ENCODE measurements at regions of chr6 and their contacts with region 1.

Region 1: DNA sequence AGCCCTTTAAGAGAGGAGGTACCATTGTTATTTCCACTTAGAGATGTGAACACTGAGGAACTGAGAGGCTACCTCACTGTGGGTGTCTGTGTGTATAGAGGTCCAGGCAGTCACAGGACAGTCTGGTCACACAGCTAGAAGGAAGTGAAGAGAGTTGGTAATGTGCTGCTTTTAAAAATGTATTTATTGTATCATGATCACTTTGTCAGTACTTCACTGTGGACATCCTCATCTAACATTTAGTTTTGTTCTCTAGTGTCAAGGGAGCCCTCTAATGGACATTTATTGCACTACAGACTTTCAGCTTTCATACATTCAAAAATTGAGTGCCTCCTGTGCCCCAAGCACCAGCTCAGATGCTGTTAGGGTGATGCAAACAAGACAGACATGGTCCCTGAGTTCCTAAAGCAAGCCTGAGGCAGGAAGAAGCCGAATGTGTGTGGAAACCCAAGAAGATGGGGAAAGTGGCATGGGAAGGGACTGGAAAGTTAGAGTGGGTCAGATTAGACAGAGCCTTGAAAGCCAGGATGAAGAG is 123.0 kb downstream of the SLC16A10 start:
- DNase-seq: peak in 1 of 2 experiments; percentile 65
- H3K4me3 ChIP-seq: no peak overlapping the region
- H3K4me3 Mint-ChIP-seq: no peak overlapping the region
- H3K27ac Mint-ChIP-seq: no peak overlapping the region
- H3K4me1 ChIP-seq: no peaks in the 10 kb centered on the region
- H3K4me1 Mint-ChIP-seq: no peaks in the 10 kb centered on the region
- H3K27me3 ChIP-seq: no peaks in the 10 kb centered on the region
- H3K27me3 Mint-ChIP-seq: no peaks in the 10 kb centered on the region
- CTCF ChIP-seq: peak; percentile 60 to 77

Region 2: GRCh38 chr6:110528101-110528929 is 681.9 kb before region 1 on chr6:
- CTCF ChIA-PET with region 1: interaction called, 4 read pairs
- POLR2A ChIA-PET with region 1: no interaction called
- intact Hi-C with region 1: loop called (anchors 1 kb)
- DNase-seq: peak in 1 of 2 experiments; percentile 58
- H3K4me3 ChIP-seq: no peak overlapping the region
- H3K4me3 Mint-ChIP-seq: no peak overlapping the region
- H3K27ac Mint-ChIP-seq: no peak overlapping the region
- H3K4me1 ChIP-seq: peaks cover 3% of the 10 kb centered on the region; the same call in 1 of the 2 replicates
- H3K4me1 Mint-ChIP-seq: no peaks in the 10 kb centered on the region
- H3K27me3 ChIP-seq: no peaks in the 10 kb centered on the region
- H3K27me3 Mint-ChIP-seq: no peaks in the 10 kb centered on the region
- CTCF ChIP-seq: peak; percentile 68 to 79

Region 3: GRCh38 chr6:111011360-111012142 is 198.7 kb before region 1 on chr6:
- CTCF ChIA-PET with region 1: interaction called, 8 read pairs
- POLR2A ChIA-PET with region 1: no interaction called
- intact Hi-C with region 1: loop called (anchors 1 kb)
- DNase-seq: peak in 1 of 2 experiments; percentile 43
- H3K4me3 ChIP-seq: no peak overlapping the region
- H3K4me3 Mint-ChIP-seq: no peak overlapping the region
- H3K27ac Mint-ChIP-seq: no peak overlapping the region
- H3K4me1 ChIP-seq: no peaks in the 10 kb centered on the region
- H3K4me1 Mint-ChIP-seq: no peaks in the 10 kb centered on the region
- H3K27me3 ChIP-seq: no peaks in the 10 kb centered on the region
- H3K27me3 Mint-ChIP-seq: no peaks in the 10 kb centered on the region
- CTCF ChIP-seq: peak; percentile 62 to 67

Region 4: DNA sequence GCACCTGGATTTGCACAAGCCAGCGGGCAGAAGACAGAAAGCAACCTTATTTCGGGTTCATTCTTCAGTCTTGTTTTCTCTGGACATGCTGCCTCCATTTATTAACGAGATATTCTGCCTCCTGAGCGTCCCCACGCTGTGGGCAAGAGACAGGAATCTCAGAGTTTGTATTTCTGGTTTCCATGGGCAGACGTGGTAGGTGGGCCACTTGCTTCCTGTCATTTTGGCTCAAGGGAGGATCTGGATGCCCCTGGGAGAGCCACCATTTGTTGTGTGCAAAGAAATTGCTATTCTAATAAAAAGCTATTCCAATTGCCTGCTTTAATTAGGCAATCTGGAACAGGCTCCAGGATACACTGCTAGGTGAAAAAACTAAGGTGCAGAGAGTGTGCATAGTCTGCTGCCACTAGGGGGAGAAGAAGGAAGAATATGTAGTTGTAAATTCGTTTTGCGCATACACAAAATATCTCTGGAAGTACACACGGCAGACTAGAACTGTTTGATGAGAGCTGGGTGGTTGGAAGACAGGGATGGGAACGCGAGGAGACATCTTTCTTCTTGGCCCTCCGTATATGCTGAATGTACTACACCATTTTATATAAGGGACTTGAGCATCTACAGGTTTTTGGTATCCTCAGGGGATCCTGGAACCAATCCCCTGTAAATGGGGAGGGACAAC is 153.0 kb before region 1 on chr6:
- CTCF ChIA-PET with region 1: interaction called, 18 read pairs
- POLR2A ChIA-PET with region 1: no interaction called
- intact Hi-C with region 1: loop called (anchors 1 kb)
- DNase-seq: peak; percentile 19 to 39
- H3K4me3 ChIP-seq: no peak overlapping the region
- H3K4me3 Mint-ChIP-seq: no peak overlapping the region
- H3K27ac Mint-ChIP-seq: no peak overlapping the region
- H3K4me1 ChIP-seq: no peaks in the 10 kb centered on the region
- H3K4me1 Mint-ChIP-seq: peaks cover 11% of the 10 kb centered on the region
- H3K27me3 ChIP-seq: no peaks in the 10 kb centered on the region
- H3K27me3 Mint-ChIP-seq: no peaks in the 10 kb centered on the region
- CTCF ChIP-seq: peak; percentile 71 to 82

Region 5: DNA sequence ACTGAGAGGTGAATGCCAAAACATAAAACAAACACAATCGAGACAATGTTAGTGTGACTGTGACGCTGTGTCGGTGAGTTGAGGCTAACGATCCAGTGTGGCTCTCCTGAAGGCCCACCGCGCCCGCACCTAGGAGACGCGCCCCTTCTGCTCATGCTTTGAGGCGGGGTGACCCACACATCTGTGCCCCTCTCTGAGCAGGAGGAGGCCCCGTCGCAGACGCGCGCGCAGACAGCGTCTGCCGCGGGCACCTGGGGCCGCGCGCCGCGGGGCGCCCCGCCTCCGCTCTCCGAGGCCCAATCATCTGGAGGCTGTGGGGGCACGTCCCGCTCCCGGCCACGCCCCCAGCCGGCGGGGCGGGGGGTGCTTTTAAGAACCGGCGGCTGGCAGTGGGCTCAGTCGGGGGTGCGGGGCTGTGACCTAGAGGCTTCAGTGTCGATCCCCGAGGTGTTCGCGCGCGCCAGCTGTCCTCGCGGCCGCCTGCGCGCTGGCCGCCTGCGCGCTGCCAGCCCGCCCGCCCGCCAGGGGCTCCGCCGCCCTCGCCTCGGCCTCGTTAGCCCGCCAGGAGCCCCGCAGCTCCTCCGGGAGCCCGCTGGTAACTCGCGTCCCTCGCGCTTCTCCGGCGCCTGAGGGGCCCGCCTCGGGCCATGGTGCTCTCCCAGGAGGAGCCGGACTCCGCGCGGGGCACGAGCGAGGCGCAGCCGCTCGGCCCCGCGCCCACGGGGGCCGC is 123.0 kb before region 1 on chr6 and contains the start of gene SLC16A10:
- CTCF ChIA-PET with region 1: no interaction called
- POLR2A ChIA-PET with region 1: no interaction called
- intact Hi-C with region 1: loop called (anchors 10 kb)
- DNase-seq: peak; percentile 83 to 90
- H3K4me3 ChIP-seq: peak within 1 kb of the TSS; percentile 85
- H3K4me3 Mint-ChIP-seq: peak within 1 kb of the TSS; percentile 87
- H3K27ac Mint-ChIP-seq: peak within 1 kb of the TSS; percentile 39
- H3K4me1 ChIP-seq: 0 out of 2 replicates have a peak, but pooled peaks cover 7% of the 10 kb centered on the region
- H3K4me1 Mint-ChIP-seq: peaks cover 14% of the 10 kb centered on the region
- H3K27me3 ChIP-seq: no peaks in the 10 kb centered on the region
- H3K27me3 Mint-ChIP-seq: no peaks in the 10 kb centered on the region
- CTCF ChIP-seq: no peak
- total RNA-seq, gene SLC16A10: 13.6 and 14.2 TPM in 2 replicates

Region 6: DNA sequence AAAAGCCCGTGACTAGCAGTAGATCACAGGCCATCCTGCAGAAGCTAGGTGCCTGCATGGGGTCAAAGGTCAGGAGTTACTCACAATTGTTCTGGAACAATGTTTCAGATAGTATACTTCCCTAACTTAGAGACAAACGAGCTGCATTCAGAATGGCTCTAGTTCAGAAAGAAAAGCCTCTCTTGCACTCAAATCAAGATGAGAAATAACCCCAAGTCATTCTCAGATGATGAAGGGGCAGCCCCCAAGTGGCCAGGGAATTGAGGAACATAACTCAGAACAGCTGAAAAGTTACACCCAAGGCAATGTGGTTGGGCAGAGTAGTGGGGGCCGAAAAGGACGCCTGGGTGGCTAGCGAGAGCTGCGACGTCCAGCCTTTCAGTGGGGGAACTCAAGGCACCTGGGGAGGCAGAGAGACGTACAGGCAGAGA is 635.2 kb after region 1 on chr6:
- CTCF ChIA-PET with region 1: no interaction called
- POLR2A ChIA-PET with region 1: no interaction called
- intact Hi-C with region 1: no loop called
- DNase-seq: peak in 1 of 2 experiments; percentile 5
- H3K4me3 ChIP-seq: no peak overlapping the region
- H3K4me3 Mint-ChIP-seq: no peak overlapping the region
- H3K27ac Mint-ChIP-seq: no peak overlapping the region
- H3K4me1 ChIP-seq: peaks cover 21% of the 10 kb centered on the region
- H3K4me1 Mint-ChIP-seq: no peaks in the 10 kb centered on the region
- H3K27me3 ChIP-seq: no peaks in the 10 kb centered on the region
- H3K27me3 Mint-ChIP-seq: no peaks in the 10 kb centered on the region
- CTCF ChIP-seq: no peak

Measured in Caco-2 (cell line).